Activated naive CD4-positive, alpha-beta T cell treated with anti-CD3 and anti-CD28 coated beads for 36 hours (primary cell): ENCODE measurements at regions of chr1 and their contacts with region 1.

Region 1: DNA sequence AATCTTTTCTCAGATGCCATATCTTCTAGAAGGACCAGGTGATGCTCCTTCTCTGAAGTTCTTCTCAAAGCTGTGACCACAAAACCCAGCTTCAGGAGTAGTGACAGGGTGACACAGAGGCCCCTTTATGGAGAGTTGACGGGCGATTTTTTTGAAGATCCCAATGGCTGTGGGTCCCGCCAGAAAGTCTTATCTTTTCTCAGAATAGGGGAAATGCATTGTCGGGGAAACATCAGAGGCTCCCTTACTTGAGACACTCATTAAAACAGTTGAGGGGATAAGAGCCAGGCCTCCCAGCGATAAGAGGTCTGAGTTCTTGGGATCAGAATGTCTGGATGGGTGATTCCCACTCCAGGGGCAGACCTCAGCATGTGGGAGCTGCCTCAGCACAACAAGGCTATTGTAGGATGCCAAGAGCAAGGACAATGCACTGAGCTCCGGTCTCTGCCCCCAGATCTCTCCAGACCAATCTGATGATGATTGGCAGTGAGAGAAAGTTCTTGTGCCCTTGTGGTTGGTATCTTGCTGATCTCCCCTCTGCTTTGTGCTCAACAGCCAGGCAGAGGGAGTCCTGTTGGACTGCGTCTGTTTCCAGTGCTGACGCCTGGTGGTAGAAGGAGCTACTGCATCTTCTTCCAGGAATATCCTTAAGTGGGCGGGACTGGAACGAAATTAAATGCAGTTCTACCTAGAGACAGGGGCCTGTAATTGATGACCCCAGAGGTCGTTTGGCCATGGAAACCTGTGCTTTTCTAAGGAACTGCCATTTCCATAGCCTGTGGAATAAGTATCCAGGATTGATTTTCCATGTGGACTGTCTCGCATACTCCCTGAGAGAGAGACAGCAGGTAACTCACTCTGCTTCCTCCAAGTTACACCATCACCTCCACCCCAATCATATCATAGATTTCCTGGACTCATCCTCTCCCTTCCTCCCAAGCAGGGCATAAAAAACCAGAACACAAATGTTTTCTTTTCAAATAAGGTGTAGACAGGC is 6.8 kb upstream of the ACKR1 start:
- DNase-seq: peak; percentile 76
- H3K4me3 Mint-ChIP-seq: no peak overlapping the region
- H3K27ac Mint-ChIP-seq: no peak overlapping the region
- H3K4me1 Mint-ChIP-seq: peaks cover 5% of the 10 kb centered on the region
- H3K27me3 Mint-ChIP-seq: peaks cover 47% of the 10 kb centered on the region

Region 2: DNA sequence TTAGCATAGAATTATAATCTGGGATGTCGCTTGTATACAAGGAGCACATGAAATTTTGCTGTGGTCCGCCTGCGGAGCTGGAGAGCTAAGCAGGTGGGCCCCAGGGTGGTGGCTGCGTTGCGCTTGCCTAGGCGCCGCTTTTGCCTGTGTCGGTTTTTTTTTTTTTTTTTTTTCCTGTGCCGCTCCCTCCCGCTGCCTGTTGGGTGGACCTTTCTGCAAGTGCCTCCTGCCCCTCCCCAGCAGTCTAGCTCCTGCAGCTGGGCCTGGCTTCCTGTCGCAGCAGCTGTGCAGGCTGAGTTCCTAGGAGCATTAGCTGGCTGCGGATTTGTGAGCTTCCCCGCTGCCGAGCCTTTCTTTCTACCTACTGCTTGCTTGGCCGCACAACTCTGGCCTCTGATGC is 245.9 kb before region 1 on chr1:
- CTCF ChIA-PET with region 1: no interaction called
- intact Hi-C with region 1: no loop called
- DNase-seq: no peak
- H3K4me3 Mint-ChIP-seq: no peak overlapping the region
- H3K27ac Mint-ChIP-seq: no peak overlapping the region
- H3K4me1 Mint-ChIP-seq: no peaks in the 10 kb centered on the region
- H3K27me3 Mint-ChIP-seq: no peaks in the 10 kb centered on the region

Region 3: DNA sequence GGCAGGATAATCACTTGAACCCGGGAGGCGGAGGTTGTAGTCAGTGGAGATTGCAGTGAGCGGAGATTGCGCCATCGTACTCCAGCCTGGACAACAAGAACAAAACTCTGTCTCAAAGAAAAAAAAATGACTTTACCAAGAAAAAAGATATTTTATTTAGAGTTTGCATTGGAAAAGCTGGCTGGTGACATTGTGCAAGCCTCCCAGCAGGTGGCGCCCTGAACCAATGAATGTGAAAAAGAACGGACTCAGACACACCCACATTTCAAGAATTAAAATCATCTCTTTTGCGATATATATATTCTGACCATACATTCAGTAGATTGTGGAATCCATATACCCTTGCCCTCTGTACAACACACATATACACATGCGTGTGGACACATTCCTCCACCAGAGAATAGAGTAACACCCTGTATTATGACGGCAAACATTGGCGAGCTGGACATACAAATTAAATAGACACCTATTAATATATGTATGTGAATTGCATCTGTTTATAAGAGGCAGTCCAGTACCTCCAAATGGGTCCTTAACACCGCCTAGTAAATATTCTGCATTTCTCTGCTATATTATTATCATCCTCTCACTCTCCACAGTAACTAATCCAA is 65.5 kb before region 1 on chr1:
- CTCF ChIA-PET with region 1: interaction called, 24 read pairs
- intact Hi-C with region 1: loop called (anchors 1 kb)
- DNase-seq: peak; percentile 84
- H3K4me3 Mint-ChIP-seq: no peak overlapping the region
- H3K27ac Mint-ChIP-seq: no peak overlapping the region
- H3K4me1 Mint-ChIP-seq: no peaks in the 10 kb centered on the region
- H3K27me3 Mint-ChIP-seq: peaks cover 6% of the 10 kb centered on the region

Region 4: GRCh38 chr1:159161001-159161718 is 36.7 kb before region 1 on chr1:
- CTCF ChIA-PET with region 1: interaction called, 35 read pairs
- intact Hi-C with region 1: loop called (anchors 1 kb)
- DNase-seq: peak; percentile 80
- H3K4me3 Mint-ChIP-seq: no peak overlapping the region
- H3K27ac Mint-ChIP-seq: no peak overlapping the region
- H3K4me1 Mint-ChIP-seq: no peaks in the 10 kb centered on the region
- H3K27me3 Mint-ChIP-seq: peaks cover 43% of the 10 kb centered on the region